B cell (primary cell): ENCODE measurements at regions of chr9 and their contacts with region 1.

Region 1: GRCh38 chr9:92133949-92134604 is 18.9 kb upstream of the SPTLC1 start:
- DNase-seq: peak; percentile 78
- ATAC-seq: peak; percentile 76
- H3K4me3 ChIP-seq: no peak overlapping the region
- H3K4me3 Mint-ChIP-seq: peak overlapping the region; percentile 66
- H3K27ac ChIP-seq: no peak overlapping the region
- H3K27ac Mint-ChIP-seq: no peak overlapping the region
- H3K4me1 ChIP-seq: peaks cover 8 to 12% of the 10 kb centered on the region in 2 donors
- H3K4me1 Mint-ChIP-seq: peaks cover 7% of the 10 kb centered on the region
- H3K27me3 ChIP-seq: peaks cover 0 to 21% (median 2%) of the 10 kb centered on the region in 4 experiments
- H3K27me3 Mint-ChIP-seq: peaks cover 41% of the 10 kb centered on the region
- CTCF ChIP-seq: peak; percentile 99

Region 2: DNA sequence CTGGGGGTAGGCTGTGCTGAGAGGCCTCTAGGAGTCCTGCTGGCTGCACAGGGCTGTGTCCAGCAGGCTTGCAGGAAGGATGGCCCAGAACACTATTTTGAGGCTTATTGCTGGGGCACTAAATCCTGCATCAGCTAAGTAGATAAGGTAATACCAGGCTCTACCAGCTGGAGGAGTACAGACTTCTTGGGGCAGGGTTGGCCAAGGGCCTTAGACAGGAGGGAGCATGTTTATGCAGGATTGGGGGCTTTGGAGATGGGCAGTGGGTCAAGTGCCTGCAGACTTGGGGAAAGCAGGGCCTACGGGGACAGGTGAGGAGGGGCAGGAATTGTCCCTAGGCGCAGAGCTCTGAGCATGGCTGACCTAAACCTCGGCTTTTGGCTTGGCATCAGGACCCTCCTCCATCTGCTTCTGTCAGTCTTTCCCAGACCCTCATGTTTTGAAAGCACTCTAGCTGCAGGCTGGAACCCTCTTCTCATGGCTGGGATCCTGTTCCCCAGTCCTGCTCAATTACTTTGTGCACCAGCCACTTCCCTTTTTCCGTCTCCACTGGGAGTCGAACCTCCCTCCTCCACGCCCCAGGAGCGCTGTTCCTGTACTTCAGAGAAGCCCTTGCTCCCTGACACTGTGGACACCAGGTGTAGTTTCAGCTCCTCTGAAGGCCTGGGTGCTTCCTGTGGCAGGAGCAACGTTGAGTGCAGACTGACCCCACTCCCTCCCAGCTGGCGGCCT is 42.2 kb after region 1 on chr9:
- CTCF ChIA-PET with region 1: no interaction called
- POLR2A ChIA-PET with region 1: no interaction called
- intact Hi-C with region 1: no loop called
- DNase-seq: no peak
- ATAC-seq: no peak
- H3K4me3 ChIP-seq: no peak overlapping the region
- H3K4me3 Mint-ChIP-seq: no peak overlapping the region
- H3K27ac ChIP-seq: no peak overlapping the region
- H3K27ac Mint-ChIP-seq: no peak overlapping the region
- H3K4me1 ChIP-seq: no peaks in the 10 kb centered on the region
- H3K4me1 Mint-ChIP-seq: peaks cover 4% of the 10 kb centered on the region
- H3K27me3 ChIP-seq: no peaks in the 10 kb centered on the region
- H3K27me3 Mint-ChIP-seq: peaks cover 3% of the 10 kb centered on the region
- CTCF ChIP-seq: no peak

Region 3: DNA sequence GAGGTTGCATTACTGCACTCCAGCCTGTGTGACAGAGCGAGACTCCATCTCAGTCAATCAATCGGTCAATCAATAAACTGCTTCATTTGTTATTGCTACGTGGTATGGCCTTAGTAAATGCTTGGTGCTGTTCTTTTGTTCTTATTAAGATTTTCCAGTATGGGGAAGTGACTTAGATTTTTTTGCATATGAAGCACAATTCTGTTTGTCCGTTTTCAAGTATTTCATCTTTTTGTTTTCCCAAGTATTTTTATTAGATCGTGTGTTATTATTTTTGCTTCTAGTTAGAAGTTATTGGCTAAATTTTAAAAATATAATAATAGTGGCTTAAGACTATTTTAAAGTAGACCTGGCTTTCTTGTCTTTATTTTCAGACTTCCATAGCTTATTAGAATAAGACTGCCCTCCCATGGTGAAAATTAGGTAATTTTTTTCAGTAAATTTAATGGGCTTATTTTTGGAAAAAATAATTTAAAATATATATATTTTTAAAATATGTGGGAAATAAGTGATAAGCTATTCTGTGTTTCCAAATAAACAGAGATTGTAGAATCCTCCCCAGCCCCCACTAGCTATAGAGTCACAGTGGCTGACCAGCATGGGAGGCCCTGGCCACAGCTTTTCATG is 304.9 kb after region 1 on chr9:
- CTCF ChIA-PET with region 1: interaction called, 57 read pairs
- POLR2A ChIA-PET with region 1: no interaction called
- intact Hi-C with region 1: no loop called
- DNase-seq: peak; percentile 13
- ATAC-seq: no peak
- H3K4me3 ChIP-seq: no peak overlapping the region
- H3K4me3 Mint-ChIP-seq: no peak overlapping the region
- H3K27ac ChIP-seq: no peak overlapping the region
- H3K27ac Mint-ChIP-seq: no peak overlapping the region
- H3K4me1 ChIP-seq: no peaks in the 10 kb centered on the region
- H3K4me1 Mint-ChIP-seq: no peaks in the 10 kb centered on the region
- H3K27me3 ChIP-seq: no peaks in the 10 kb centered on the region
- H3K27me3 Mint-ChIP-seq: no peaks in the 10 kb centered on the region
- CTCF ChIP-seq: peak; percentile 66